Heart right ventricle (tissue), 16 donors: ENCODE measurements at regions of chr10 and their contacts with region 1.

Region 1: DNA sequence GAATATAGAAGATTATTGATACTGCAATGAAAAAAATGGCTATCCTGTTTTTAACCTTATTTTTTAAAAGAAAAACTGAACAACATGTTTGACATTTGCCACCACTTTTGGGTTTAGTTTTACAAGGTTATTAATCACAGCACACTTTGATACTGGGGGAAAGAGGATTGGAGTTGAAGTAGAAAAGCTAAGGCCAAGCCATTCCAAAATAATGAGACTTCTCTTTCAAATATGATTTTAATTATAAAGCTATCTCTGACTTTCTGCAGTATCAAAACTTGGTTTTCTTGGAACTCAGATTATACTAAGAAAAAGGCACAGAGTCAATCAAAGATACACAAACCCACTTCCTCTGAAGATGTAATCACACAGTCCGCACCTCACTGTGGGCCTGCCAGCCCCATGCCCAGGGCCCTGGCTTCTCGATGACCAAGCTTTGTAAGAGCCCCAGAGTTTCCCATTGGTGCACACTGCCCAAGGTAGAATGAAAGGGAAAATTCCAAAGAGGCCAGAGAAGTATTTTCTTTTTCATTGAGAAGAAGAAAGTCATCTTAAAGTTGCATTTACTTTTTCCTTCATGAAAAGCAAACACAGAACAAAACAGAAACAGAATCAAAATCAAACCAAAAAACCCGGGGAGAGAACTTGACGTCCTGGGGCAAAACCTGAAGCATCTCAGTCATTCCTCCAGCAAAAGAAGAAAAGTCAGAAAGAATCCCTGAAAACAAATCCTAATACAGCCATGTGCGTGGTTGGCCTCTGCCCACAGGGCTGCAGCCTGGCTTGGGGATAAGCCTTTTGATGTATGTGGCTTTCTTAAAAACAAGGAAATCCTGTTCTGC is 187.7 kb upstream of the KLF6 start:
- DNase-seq: no peak
- ATAC-seq: peak in 1 of 8 donors; percentile 32
- H3K4me3 ChIP-seq: no peak overlapping the region
- H3K27ac ChIP-seq: peak overlapping the region in 5 of 10 donors; percentile 11 to 67 (median 35)
- H3K4me1 ChIP-seq: peaks cover 0 to 33% (median 5%) of the 10 kb centered on the region in 9 donors
- H3K27me3 ChIP-seq: no peaks in the 10 kb centered on the region
- CTCF ChIP-seq: no peak

Region 2: DNA sequence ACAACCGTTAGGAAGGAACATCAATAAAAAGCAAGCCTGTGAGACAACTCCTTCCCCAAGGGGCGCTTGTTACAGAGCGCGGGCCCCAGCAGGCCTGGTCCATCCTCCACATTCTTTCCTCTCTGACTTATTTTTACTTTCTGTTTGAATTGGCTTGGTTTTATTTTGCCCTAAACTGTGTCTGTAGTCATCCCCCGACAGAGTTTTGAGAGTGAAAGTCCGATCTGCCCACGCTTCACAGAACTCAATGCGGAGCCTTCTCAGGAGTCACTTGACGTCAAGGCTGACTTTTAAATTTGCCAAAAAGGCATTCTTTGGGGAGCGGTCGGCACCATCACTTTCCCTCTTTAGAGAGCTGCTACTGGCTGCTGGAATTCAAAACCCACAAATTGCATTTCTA is 37.5 kb before region 1 on chr10:
- intact Hi-C with region 1: no loop called
- DNase-seq: peak; percentile 26 to 73
- ATAC-seq: peak; percentile 60 to 92 (median 84)
- H3K4me3 ChIP-seq: peak overlapping the region in 8 of 10 donors; percentile 2 to 36 (median 20)
- H3K27ac ChIP-seq: peak overlapping the region; percentile 32 to 80 (median 60)
- H3K4me1 ChIP-seq: peaks cover 0 to 24% (median 10%) of the 10 kb centered on the region in 9 donors
- H3K27me3 ChIP-seq: no peaks in the 10 kb centered on the region
- CTCF ChIP-seq: peak in 2 of 9 donors; percentile 20 to 24

Region 3: DNA sequence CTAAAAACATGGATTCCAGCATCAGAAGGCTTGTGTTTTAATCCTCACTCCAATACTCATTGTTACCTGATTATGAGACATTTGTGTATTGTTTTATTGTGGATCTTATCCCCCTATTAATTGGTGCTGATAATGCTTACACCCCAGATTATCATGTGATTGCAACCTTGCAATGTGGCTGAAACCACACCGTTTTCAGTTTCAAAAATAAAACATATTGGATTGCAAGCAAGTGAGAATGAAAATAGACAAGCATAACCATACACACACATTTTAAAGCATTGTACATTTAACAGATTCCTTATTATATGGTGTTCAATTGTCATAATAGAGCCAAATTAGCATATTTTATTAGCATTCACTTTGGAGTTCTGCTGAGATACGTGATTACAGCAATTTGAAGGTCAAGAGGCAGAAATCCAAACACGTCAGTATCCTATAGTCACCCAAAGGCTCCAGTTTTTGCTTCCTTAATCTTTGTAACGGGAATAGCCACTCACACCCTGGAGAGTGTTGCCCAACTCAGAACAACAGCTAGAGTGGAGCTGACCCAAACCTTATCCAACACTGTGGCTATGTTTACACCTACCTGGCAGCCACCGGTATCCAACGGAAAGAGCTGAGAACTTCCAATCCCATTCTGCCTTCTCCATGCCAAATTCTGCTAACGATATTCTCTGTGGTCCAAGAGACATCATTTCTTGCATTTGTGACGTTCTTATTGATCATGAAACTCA is 129.4 kb after region 1 on chr10:
- intact Hi-C with region 1: loop called in 1 of 10 experiments (anchors 1 kb)
- DNase-seq: no peak
- ATAC-seq: peak in 5 of 8 donors; percentile 58 to 100 (median 86)
- H3K4me3 ChIP-seq: no peak overlapping the region
- H3K27ac ChIP-seq: no peak overlapping the region
- H3K4me1 ChIP-seq: peaks cover 0 to 15% (median 0%) of the 10 kb centered on the region in 9 donors
- H3K27me3 ChIP-seq: no peaks in the 10 kb centered on the region
- CTCF ChIP-seq: no peak

Region 4: DNA sequence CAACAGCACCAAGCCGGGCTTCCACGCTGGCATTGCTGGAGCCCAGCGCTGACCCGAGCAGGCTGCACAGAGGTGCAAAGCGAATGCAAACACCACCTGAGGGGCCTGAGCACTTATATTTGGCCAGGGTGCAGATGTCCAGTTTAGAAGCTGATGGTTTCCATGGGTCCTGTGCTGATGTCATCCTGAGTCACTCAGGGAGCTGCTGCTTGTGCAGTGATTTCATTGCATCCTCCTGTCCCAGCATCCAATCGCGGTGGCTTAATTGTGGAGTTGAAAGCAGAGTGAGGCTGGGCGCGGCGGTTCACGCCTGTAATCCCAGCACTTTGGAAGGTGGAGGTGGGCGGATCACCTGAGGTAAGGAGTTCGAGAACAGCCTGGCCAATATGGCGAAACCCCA is 222.5 kb after region 1 on chr10:
- intact Hi-C with region 1: no loop called
- DNase-seq: no peak
- ATAC-seq: no peak
- H3K4me3 ChIP-seq: no peak overlapping the region
- H3K27ac ChIP-seq: no peak overlapping the region
- H3K4me1 ChIP-seq: peaks cover 0 to 27% (median 22%) of the 10 kb centered on the region in 9 donors
- H3K27me3 ChIP-seq: no peaks in the 10 kb centered on the region
- CTCF ChIP-seq: no peak